ENCODE measurements at regions of chr16 and their contacts with region 1.

Region 1: GRCh38 chr16:23182460-23183309 is at the start of gene SCNN1G:
- DNase-seq: peak; percentile 88
- H3K4me3 Mint-ChIP-seq: peak within 1 kb of the TSS; percentile 30
- H3K27ac Mint-ChIP-seq: no peak within 1 kb of the TSS
- H3K4me1 Mint-ChIP-seq: peaks cover 7% of the 10 kb centered on the region
- H3K27me3 Mint-ChIP-seq: peaks cover 58% of the 10 kb centered on the region
- total RNA-seq, gene SCNN1G: not detected

Region 2: DNA sequence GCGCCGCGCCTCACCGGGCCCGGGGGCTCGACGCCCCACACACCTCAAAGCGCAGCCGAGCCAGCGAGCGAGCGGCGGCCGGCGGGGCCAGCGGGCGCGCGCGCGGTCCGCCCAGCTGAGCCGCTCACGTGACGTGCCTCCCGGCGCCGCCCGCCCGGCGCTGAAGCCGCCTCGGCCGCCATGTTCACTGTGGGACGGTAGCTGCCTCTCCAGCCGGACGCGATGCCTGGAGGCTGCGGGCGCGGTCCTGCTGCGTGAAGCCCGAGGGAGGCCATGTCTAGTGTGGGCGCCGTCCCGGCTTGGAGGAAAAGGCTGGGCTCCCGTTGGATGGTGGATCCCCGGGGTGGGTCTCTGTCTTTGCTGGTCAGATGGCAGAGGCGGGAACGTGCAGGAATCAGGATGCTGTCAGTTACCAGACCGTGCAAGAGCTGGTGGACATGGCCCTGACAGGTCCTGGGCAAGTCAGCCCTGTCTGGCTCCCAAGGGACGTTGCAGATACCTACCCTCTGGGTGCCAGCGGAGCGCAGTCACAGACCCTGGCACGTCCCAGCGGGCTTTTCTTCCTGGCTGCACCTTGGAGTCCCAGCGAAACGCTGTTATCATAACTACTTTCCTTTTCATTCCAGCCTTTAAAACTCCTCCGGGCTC is 33.2 kb before region 1 on chr16 and contains the start of gene USP31:
- CTCF ChIA-PET with region 1: no interaction called
- intact Hi-C with region 1: loop called (anchors 1 kb)
- DNase-seq: peak; percentile 93
- H3K4me3 Mint-ChIP-seq: peak within 1 kb of the TSS; percentile 95
- H3K27ac Mint-ChIP-seq: no peak within 1 kb of the TSS
- H3K4me1 Mint-ChIP-seq: peaks cover 21% of the 10 kb centered on the region
- H3K27me3 Mint-ChIP-seq: no peaks in the 10 kb centered on the region
- total RNA-seq, gene USP31: 5.1 to 5.2 TPM

Region 3: DNA sequence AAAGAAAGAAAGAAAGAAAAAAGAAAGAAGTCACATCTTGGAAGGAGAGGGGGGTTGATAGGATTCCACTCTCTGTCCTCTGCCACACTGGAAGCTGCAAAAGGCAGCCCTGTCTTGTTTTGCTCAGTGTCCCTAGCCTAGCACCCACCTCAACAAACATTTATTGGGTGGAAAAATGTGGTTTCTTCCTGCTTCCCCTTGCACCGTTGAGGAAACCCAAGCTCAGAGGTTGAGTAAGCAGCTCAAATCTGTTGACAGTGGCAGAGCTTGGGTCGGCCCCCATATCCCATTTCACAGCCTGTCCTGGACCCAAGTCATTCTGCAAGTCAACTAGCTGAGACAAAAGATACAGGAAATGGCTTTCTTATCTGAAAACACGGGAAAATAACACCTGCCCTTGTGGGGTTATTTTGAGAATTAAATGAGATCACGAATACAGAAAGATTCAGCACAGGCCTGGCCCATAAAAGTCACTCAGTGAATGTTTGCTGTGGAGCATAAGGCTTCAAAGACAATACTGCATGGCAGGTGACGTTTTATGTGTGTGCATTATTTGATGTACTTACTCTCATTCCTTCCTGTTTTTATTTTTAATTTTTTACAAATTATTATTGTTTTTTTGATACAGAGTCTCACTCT is 183.0 kb after region 1 on chr16:
- CTCF ChIA-PET with region 1: no interaction called
- intact Hi-C with region 1: loop called (anchors 5 kb)
- DNase-seq: peak; percentile 61
- H3K4me3 Mint-ChIP-seq: no peak overlapping the region
- H3K27ac Mint-ChIP-seq: no peak overlapping the region
- H3K4me1 Mint-ChIP-seq: peaks cover 11% of the 10 kb centered on the region
- H3K27me3 Mint-ChIP-seq: peaks cover 4% of the 10 kb centered on the region

Region 4: DNA sequence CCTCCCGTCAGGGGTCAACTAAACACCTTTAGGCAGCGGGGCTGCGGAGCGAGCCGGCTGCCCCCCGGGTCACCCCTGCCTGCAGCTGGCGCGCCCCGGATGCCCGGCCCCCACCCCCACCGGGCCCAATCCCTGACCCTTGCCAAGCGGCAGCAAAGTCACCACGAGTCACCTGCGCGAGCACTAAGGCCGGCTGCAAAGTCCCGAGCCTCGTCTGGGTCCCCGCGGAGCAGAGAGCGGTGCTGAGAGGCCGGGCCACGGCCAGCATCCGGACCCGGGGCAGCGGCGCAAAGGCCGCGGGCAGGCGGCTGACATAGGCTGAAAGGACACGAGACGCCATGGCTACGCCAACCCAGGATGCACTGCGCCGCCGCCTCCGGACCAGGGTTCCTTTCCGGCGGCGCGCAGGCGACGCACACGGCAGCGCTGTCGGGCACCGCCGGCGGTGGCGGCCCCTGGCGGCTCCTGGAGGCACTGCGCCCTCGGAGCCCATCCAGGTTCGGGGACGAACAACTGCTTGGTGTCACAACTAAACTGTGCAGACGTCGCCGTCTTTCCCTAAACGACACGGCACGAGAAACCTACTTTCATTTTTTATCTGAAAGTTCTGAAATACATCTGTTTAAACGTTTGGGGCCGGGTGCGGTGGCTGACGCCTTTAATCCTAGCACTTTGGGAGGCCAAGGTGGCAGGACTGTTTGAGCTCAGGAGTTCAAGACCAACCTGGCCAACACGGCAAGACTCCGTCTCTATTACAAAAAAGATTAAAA is 413.5 kb after region 1 on chr16 and contains the start of gene NDUFAB1:
- CTCF ChIA-PET with region 1: no interaction called
- intact Hi-C with region 1: loop called (anchors 2 kb)
- DNase-seq: peak; percentile 93
- H3K4me3 Mint-ChIP-seq: peak within 1 kb of the TSS; percentile 79
- H3K27ac Mint-ChIP-seq: peak within 1 kb of the TSS; percentile 76
- H3K4me1 Mint-ChIP-seq: peaks cover 39% of the 10 kb centered on the region
- H3K27me3 Mint-ChIP-seq: no peaks in the 10 kb centered on the region
- total RNA-seq, gene NDUFAB1: 163 to 170 TPM

Measured in activated naive CD4-positive, alpha-beta T cell treated with anti-CD3 and anti-CD28 coated beads for 36 hours (primary cell).